ENCODE measurements at regions of chr5 and their contacts with region 1.

Region 1: GRCh38 chr5:157761690-157762621 is 18.4 kb downstream of the LSM11 start:
- H3K4me3 ChIP-seq: no peak overlapping the region
- H3K27ac ChIP-seq: no peak overlapping the region
- H3K4me1 ChIP-seq: no peaks in the 10 kb centered on the region
- CTCF ChIP-seq: no peak

Region 2: GRCh38 chr5:157743163-157744050 is 18.5 kb before region 1 on chr5 and contains the start of gene LSM11:
- CTCF ChIA-PET with region 1: interaction called, 16 read pairs
- POLR2A ChIA-PET with region 1: no interaction called
- H3K4me3 ChIP-seq: peak within 1 kb of the TSS; percentile 89
- H3K27ac ChIP-seq: peak within 1 kb of the TSS; percentile 71; the same call in 1 of the 2 replicates
- H3K4me1 ChIP-seq: peaks cover 14% of the 10 kb centered on the region; the same call in 1 of the 2 replicates
- CTCF ChIP-seq: peak; percentile 99

Region 3: GRCh38 chr5:157748760-157749461 is 13.0 kb before region 1 on chr5:
- CTCF ChIA-PET with region 1: interaction called, 16 read pairs
- POLR2A ChIA-PET with region 1: no interaction called
- H3K4me3 ChIP-seq: no peak overlapping the region
- H3K27ac ChIP-seq: no peak overlapping the region
- H3K4me1 ChIP-seq: peaks cover 10% of the 10 kb centered on the region; the same call in 1 of the 2 replicates
- CTCF ChIP-seq: no peak

Region 4: DNA sequence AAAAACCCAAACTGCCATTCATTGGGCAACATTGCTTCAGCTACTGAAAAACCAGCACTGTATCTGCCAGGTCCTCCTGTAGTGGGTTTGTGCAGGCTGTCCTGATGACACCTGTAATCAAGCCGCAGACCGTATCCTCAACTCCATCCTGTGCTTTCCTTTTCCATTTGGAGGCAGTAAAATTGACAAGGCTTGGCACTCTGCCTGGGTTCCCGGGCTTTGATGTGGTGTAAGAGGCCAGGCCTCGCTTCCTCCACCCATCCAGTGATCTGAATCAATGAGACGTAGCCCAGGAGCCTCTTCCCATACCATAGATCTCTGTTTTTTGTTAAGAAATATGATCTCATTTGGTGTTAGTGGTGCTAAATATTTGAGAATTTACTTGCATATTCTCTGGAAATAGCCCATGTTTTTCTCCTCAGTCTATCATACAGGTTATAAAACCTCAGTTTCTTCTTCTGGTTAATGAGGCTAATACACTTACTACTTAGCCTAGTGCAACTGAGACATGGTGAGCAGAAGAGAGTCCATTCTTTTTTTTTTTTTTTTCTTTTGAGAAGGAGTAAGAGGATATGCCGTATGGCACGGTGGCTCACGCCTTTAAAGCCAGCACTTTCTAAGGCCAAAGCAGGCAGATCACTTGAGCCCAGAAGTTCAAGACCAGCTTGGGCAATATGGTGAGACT is 16.3 kb after region 1 on chr5:
- CTCF ChIA-PET with region 1: interaction called, 15 read pairs
- POLR2A ChIA-PET with region 1: no interaction called
- H3K4me3 ChIP-seq: no peak overlapping the region
- H3K27ac ChIP-seq: no peak overlapping the region
- H3K4me1 ChIP-seq: peaks cover 10% of the 10 kb centered on the region; the same call in 1 of the 2 replicates
- CTCF ChIP-seq: no peak

Region 5: DNA sequence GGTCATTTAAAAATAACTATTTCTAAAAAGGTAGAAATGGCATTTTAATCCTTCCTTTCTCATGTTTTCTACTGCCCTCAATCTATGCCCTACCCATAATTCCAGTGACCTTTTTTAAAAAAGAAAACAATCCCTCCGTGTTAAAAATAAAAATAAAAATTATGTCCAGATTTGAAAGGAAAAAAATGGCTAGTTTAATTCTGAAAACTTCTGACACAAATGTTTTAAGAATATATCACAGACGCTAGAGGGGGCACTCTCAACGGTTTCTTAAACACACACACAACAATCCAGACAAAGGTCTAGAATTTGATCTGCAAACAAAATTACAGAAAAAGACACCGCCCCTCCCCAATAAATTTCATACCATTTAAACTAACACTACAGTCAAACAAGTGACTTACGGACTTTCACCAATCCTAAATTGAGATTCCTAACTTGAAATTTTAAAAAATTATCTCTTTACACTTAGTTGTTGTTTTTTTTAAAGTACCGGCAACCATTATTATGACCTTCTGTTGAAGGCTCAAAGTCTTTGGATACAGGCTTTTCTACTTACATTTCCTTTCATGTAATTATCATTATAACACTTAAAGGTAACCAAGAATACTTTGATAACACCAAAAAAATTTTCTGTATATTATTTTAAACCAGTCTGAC is 58.8 kb after region 1 on chr5:
- CTCF ChIA-PET with region 1: interaction called, 15 read pairs
- POLR2A ChIA-PET with region 1: no interaction called
- H3K4me3 ChIP-seq: no peak overlapping the region
- H3K27ac ChIP-seq: peak overlapping the region; percentile 7; the same call in 1 of the 2 replicates
- H3K4me1 ChIP-seq: peaks cover 9% of the 10 kb centered on the region
- CTCF ChIP-seq: no peak

Region 6: DNA sequence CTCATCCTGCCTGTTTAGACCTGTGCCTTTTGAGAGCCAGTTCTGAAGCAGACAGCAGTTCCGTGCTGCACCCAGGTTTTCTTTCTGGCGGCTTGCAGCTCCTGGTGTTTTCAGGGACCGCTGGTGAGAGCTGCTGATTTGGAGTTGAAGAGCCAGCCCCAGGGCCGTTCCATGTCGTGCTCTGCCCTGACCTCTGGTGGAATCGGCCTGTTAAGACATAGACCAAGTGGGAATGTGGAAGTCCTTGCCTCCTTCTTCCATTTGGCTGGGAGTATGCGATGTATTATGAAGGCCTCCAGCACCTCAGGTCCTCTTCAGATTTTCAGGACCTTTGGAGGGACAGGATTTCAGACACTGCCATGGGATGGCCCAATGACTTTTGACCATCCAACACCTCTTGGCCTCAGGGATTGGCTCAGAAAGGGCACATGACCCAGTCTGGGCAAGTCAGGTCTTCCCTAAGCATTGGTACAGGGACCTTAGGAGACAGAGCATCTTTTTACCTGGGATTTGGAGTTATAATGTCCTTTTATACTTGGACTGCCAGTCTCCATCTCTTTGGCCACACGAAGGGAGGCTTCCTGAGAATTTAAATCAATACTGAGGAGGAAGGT is 233.1 kb after region 1 on chr5:
- CTCF ChIA-PET with region 1: interaction called, 12 read pairs
- POLR2A ChIA-PET with region 1: no interaction called
- H3K4me3 ChIP-seq: no peak overlapping the region
- H3K27ac ChIP-seq: no peak overlapping the region
- H3K4me1 ChIP-seq: 0 out of 2 replicates have a peak, but pooled peaks cover 2% of the 10 kb centered on the region
- CTCF ChIP-seq: peak; percentile 55

Region 7: GRCh38 chr5:159133041-159133741 is 1371.2 kb after region 1 on chr5:
- CTCF ChIA-PET with region 1: interaction called, 10 read pairs
- POLR2A ChIA-PET with region 1: no interaction called
- H3K4me3 ChIP-seq: no peak overlapping the region
- H3K27ac ChIP-seq: no peak overlapping the region; the same call in 1 of the 2 replicates
- H3K4me1 ChIP-seq: peaks cover 11% of the 10 kb centered on the region
- CTCF ChIP-seq: peak; percentile 58; the same call in 1 of the 2 replicates